ENCODE measurements at regions of chr16 and their contacts with region 1.

Region 1: DNA sequence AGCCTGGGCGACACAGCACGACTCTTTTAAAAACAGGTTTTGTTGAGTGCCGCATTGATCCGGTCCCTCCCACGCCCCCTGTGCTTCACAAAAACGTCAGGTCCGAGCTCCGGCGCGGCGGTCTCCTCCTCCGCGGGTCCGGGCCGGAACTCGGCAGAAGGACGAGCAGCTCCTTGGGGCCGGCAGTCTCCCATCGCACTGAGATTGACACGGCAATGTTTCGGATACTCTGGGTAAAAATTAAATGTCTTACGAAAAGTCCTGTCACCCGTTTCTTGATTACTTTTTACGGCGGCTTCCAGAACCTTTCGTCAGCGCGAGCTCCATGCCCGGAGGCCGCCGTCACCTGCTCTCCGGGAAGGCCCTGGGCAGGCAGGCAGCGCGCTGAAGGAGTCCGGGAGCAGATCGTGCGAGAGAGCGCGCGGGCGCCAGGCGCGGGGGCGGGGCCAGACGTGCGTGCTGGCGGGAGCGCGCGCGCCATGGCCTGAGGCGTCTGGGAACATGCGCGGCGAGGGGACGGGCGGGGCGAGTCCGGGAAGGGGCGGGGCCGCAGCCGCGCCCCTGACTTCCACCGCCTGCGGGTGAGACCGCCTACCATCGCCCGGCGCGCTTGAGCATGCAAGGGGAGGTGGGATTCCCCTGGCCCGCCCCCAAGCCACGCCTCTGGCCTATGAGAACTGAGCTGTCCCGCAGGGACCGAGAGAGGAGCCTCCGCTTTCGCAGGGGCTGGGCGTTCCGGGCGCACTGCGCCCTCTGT is 11.7 kb upstream of the SRL start:
- DNase-seq: peak; percentile 96 to 100
- H3K4me3 ChIP-seq: peak overlapping the region; percentile 52
- H3K4me1 ChIP-seq: no peaks in the 10 kb centered on the region
- H3K27me3 ChIP-seq: no peaks in the 10 kb centered on the region

Region 2: DNA sequence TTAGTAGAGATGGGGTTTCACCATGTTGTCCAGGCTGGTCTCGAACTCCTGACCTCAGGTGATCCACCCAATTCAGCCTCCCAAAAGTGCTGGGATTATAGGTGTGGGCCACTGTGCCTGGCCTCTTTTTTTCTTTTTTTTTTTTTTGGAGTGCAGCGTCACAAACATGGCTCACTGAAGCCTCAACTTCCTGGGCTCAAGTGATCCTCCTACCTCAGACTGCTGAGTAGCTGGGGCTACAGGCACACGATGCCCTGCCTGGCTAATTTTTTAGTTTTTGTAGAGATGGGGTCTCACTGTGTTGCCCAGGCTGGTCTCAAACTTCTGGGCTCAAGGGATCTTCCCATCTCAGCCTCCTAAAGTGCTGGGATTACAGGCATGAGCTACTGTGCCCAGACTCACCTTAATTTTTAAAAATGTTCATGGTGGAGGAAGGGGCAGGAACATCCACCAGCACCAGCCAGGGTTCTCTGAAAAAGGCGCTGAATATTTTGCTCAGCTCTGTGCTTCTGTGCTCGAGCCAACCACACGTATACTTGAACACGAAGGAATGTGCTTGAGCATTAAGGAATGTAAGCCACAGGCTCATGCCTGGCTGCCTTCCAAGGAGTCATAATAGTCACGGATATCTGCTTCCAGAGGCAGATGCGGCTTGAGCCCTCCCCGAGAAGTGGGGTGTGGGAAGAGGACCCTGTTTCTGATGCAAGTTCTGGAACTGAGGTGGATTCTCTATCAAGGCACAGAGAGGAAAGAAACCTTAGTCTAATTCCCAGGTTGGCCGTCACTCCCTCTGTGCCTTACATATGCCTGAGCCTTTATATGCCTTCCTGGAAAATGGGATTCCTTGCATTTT is 307.6 kb before region 1 on chr16:
- in situ Hi-C with region 1: loop called (anchors 10 kb)
- DNase-seq: peak; percentile 76 to 80
- H3K4me3 ChIP-seq: no peak overlapping the region
- H3K4me1 ChIP-seq: peaks cover 3% of the 10 kb centered on the region; the same call in 1 of the 2 replicates
- H3K27me3 ChIP-seq: no peaks in the 10 kb centered on the region

Region 3: DNA sequence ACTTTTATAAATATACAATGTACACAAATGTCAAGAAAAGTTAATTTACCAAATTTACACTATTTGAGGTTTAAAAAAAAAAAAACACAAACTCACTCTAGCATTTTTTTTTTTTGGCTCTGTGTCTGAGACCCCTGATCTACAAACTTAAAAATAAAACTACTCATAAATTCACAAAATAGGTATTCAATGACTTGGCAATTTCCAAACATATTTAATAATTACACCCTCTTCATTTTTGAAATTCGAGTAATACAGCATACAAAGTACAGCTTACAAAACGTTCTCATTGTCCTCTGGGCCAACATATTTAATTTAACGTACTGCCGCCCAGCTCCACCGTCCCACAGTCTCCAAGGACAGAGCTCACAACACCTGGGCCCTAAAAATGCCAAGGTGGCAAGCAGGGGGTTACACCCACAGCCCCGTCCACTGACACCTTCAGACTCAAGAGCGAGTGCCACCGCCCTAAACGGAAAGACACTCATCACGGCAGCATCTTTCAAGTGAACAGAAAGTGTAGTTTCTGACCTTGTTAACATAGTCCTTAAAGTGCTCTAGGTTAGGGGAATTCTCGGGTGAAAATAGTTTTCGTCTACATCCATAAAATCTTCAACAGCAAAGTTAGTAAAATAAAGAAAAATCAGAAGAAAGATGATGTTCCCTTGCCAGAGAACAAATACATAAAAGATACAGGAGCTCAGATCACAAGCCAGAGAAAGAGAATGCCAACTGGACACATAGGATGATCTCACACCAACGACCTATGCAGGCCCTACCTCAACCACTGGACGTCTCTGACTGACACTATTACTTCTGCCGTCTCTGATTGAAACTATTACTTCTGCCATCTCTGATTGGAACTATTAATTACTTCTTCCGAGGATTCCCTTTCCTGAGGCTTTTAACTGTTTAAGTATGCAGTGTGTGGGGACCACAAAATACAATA is 141.6 kb before region 1 on chr16:
- in situ Hi-C with region 1: loop called (anchors 5 kb)
- DNase-seq: no peak
- H3K4me3 ChIP-seq: peak overlapping the region; percentile 55
- H3K4me1 ChIP-seq: peaks cover 33% of the 10 kb centered on the region
- H3K27me3 ChIP-seq: no peaks in the 10 kb centered on the region